ENCODE measurements at regions of chr22 and their contacts with region 1.

Region 1: DNA sequence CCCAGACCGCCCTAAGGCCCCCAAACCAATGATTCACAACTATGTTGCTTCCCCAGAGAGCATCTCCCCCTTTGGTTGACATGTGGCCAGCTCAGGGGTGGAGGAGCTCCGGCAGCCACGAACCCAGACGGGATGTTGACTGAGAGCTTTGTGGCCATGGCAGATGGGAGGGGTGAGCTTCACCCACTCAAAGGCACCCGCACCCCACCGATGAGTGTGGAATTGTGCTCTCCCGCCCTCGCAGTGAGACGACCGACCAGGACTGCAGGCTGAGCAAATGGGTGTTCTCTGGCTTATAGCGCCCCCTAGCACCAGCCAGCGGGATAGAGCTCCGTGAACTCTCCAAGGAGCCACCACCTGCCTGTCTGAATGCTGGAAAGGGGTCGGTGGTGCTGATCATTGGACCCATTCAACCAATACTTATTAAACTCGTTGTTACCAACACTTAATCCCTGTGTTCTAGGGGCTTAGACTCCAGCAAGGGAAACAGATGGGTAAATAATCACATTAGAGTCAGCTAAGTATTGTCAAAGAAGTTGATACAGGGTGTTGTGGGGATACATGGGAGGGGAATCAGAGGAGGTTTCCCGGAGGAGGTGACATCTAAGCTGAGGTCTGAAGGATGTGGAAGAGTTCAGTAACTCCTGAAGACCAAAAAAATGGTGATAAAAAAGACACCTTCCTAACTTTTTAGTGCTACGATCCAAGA is 4.5 kb upstream of the TIMP3 start:
- DNase-seq: peak; percentile 91

Region 2: GRCh38 chr22:32655068-32655467 is 142.0 kb before region 1 on chr22:
- intact Hi-C with region 1: loop called in 1 of 2 experiments (anchors 5 kb)
- DNase-seq: no peak

Region 3: GRCh38 chr22:32700191-32700882 is 96.7 kb before region 1 on chr22:
- intact Hi-C with region 1: loop called in 1 of 2 experiments (anchors 10 kb)
- DNase-seq: no peak